GM12878 (cell line): ENCODE measurements at regions of chr9 and their contacts with region 1.

Region 1: DNA sequence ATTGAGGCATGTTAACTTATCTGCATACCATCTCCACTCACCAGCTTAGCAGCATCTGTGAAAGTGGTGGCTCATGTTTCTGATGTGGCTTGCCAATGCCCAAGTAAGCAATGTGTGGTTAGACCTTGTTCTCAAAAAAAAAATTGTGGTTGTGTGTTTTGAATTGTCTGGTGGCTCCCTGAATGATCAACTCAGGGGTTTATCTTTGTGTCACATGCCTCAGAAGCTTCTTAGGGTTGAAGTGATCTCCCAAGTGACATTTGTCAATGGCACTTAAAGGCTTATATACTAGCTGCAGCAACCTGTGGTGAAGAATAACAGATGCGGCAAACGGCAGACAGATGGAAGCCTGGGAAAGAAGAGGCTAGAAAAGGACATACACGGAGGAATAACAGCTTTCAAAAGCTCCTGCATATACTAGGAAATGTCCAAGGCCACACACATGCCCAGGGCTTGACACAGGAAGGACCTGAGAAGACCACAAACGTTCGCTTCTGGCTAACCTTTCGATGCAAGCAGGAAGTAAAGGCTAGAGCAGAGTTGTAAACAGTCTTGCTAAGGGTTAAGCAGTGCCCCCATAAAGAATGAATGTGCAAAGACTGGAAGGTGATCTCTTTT is 42.2 kb upstream of the FSD1L start:
- DNase-seq: peak; percentile 85
- ATAC-seq: peak; percentile 97
- H3K4me3 ChIP-seq: 0 out of 2 replicates have a peak overlapping the region, but pooled peaks have one; percentile 4
- H3K27ac ChIP-seq: no peak overlapping the region
- H3K4me1 ChIP-seq: no peaks in the 10 kb centered on the region; the same call in 1 of the 2 replicates
- H3K27me3 ChIP-seq: no peaks in the 10 kb centered on the region
- CTCF ChIP-seq: no peak
- EP300 ChIP-seq: peak in 1 of 2 experiments; percentile 75; a peak in 2 of 4 replicates
- POLR2A ChIP-seq: no peak
- RAD21 ChIP-seq: no peak

Region 2: DNA sequence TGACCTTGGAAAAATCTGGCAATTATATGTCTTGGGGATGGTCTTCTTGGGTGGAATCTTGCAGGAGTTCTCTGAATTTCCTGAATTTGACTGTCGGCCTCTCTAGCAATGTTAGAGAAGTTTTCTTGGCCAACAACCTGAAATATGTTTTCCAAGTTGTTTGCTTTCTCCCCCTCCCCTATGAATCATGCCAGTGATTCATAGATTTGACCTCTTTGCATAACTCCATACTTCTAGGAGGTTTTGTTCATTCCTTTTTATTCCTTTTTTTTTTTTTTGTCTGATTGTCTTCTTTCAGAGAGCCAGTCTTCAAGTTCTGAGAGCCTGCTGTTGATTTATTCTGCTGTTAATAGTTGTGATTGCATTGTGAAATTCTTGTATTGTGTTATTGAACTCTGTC is 217.8 kb before region 1 on chr9:
- CTCF ChIA-PET with region 1: interaction called, 4 read pairs
- POLR2A ChIA-PET with region 1: no interaction called
- RAD21 ChIA-PET with region 1: interaction called, 3 read pairs
- SMC1A ChIA-PET with region 1: no interaction called
- in situ Hi-C with region 1: no loop called
- intact Hi-C with region 1: loop called (anchors 5 kb)
- DNase-seq: no peak
- ATAC-seq: no peak
- H3K4me3 ChIP-seq: no peak overlapping the region
- H3K27ac ChIP-seq: no peak overlapping the region
- H3K4me1 ChIP-seq: peaks cover 8% of the 10 kb centered on the region
- H3K27me3 ChIP-seq: no peaks in the 10 kb centered on the region
- CTCF ChIP-seq: no peak
- EP300 ChIP-seq: no peak
- POLR2A ChIP-seq: no peak
- RAD21 ChIP-seq: no peak

Region 3: GRCh38 chr9:105355781-105356180 is 49.8 kb before region 1 on chr9:
- CTCF ChIA-PET with region 1: interaction called, 6 read pairs
- POLR2A ChIA-PET with region 1: interaction called, 4 read pairs
- RAD21 ChIA-PET with region 1: no interaction called
- SMC1A ChIA-PET with region 1: interaction called, 5 read pairs
- in situ Hi-C with region 1: no loop called
- intact Hi-C with region 1: loop called (anchors 5 kb)
- DNase-seq: peak; percentile 5
- ATAC-seq: peak; percentile 90
- H3K4me3 ChIP-seq: no peak overlapping the region
- H3K27ac ChIP-seq: no peak overlapping the region
- H3K4me1 ChIP-seq: peaks cover 10% of the 10 kb centered on the region
- H3K27me3 ChIP-seq: no peaks in the 10 kb centered on the region
- CTCF ChIP-seq: peak in 1 of 3 experiments; percentile 27; a peak in 1 of 6 replicates
- EP300 ChIP-seq: no peak
- POLR2A ChIP-seq: no peak
- RAD21 ChIP-seq: 0 out of 2 replicates have a peak, but pooled peaks have one; percentile 26

Region 4: GRCh38 chr9:105385381-105385985 is 20.1 kb before region 1 on chr9:
- CTCF ChIA-PET with region 1: interaction called, 5 read pairs
- POLR2A ChIA-PET with region 1: no interaction called
- RAD21 ChIA-PET with region 1: interaction called, 3 read pairs
- SMC1A ChIA-PET with region 1: interaction called, 12 read pairs
- in situ Hi-C with region 1: no loop called
- intact Hi-C with region 1: no loop called
- DNase-seq: peak; percentile 27
- ATAC-seq: peak; percentile 99
- H3K4me3 ChIP-seq: peak overlapping the region; percentile 41; the same call in 1 of the 2 replicates
- H3K27ac ChIP-seq: peak overlapping the region; percentile 52; the same call in 1 of the 2 replicates
- H3K4me1 ChIP-seq: peaks cover 5% of the 10 kb centered on the region
- H3K27me3 ChIP-seq: no peaks in the 10 kb centered on the region
- CTCF ChIP-seq: no peak
- EP300 ChIP-seq: peak in 1 of 2 experiments; percentile 48; a peak in 1 of 4 replicates
- POLR2A ChIP-seq: no peak
- RAD21 ChIP-seq: no peak

Region 5: DNA sequence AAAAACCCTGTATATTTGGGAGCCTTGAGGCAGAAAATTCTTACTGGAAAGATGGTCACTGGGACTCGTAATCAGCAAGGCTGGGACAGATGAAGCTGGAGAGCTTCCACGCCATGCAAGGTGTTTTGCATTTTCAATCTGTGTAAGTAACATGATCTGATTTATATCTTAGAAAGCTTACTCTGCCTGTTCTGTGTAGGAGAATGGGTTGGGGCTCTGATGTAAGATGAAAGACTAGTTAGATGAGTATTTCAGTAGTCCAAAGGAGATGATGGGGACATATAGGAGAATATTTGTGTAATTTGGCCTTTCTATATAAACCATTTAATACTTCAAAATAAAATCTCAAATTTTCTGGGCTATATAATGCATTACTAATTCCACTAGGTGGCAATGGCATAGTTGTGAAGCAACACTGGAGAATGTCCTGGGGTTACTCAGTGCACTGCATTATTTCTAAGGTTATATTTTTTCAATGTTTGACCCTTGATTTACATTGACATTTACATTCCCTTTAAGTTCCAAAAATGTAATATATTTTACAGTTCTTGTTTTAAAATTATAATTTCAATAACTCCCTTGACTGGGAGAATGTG is 20.3 kb after region 1 on chr9:
- CTCF ChIA-PET with region 1: no interaction called
- POLR2A ChIA-PET with region 1: no interaction called
- RAD21 ChIA-PET with region 1: no interaction called
- SMC1A ChIA-PET with region 1: no interaction called
- in situ Hi-C with region 1: no loop called
- intact Hi-C with region 1: no loop called
- DNase-seq: no peak
- ATAC-seq: peak; percentile 95
- H3K4me3 ChIP-seq: no peak overlapping the region
- H3K27ac ChIP-seq: no peak overlapping the region
- H3K4me1 ChIP-seq: no peaks in the 10 kb centered on the region
- H3K27me3 ChIP-seq: no peaks in the 10 kb centered on the region
- CTCF ChIP-seq: peak; percentile 43 to 63 (median 48); a peak in 4 of 6 replicates
- EP300 ChIP-seq: no peak
- POLR2A ChIP-seq: no peak
- RAD21 ChIP-seq: peak; percentile 78